ENCODE measurements at regions of chr1 and their contacts with region 1.

Region 1: GRCh38 chr1:173212952-173213491 is 5.9 kb upstream of the TNFSF4 start:
- DNase-seq: no peak
- H3K4me3 ChIP-seq: no peak overlapping the region
- H3K27ac ChIP-seq: no peak overlapping the region
- H3K4me1 ChIP-seq: peaks cover 4% of the 10 kb centered on the region
- H3K27me3 ChIP-seq: no peaks in the 10 kb centered on the region
- CTCF ChIP-seq: no peak
- EP300 ChIP-seq: no peak
- POLR2A ChIP-seq: no peak

Region 2: GRCh38 chr1:172818841-172819527 is 394.0 kb before region 1 on chr1:
- intact Hi-C with region 1: loop called in 1 of 4 experiments (anchors 10 kb)
- DNase-seq: no peak
- H3K4me3 ChIP-seq: no peak overlapping the region
- H3K27ac ChIP-seq: no peak overlapping the region
- H3K4me1 ChIP-seq: no peaks in the 10 kb centered on the region
- H3K27me3 ChIP-seq: no peaks in the 10 kb centered on the region
- CTCF ChIP-seq: no peak
- EP300 ChIP-seq: no peak
- POLR2A ChIP-seq: no peak

Region 3: GRCh38 chr1:172863031-172863430 is 350.0 kb before region 1 on chr1:
- intact Hi-C with region 1: no loop called
- DNase-seq: no peak
- H3K4me3 ChIP-seq: no peak overlapping the region
- H3K27ac ChIP-seq: no peak overlapping the region
- H3K4me1 ChIP-seq: no peaks in the 10 kb centered on the region
- H3K27me3 ChIP-seq: no peaks in the 10 kb centered on the region
- CTCF ChIP-seq: no peak
- EP300 ChIP-seq: no peak
- POLR2A ChIP-seq: no peak

Measured in ovary (tissue), 10 donors.